ENCODE measurements at regions of chr6 and their contacts with region 1.

Region 1: GRCh38 chr6:291697-292505 is at the start of gene DUSP22:
- DNase-seq: peak; percentile 87
- H3K4me3 Mint-ChIP-seq: peak within 1 kb of the TSS; percentile 91
- H3K27ac Mint-ChIP-seq: peak within 1 kb of the TSS; percentile 92
- H3K4me1 Mint-ChIP-seq: peaks cover 43% of the 10 kb centered on the region
- H3K27me3 Mint-ChIP-seq: peaks cover 1% of the 10 kb centered on the region
- total RNA-seq, gene DUSP22: 28.0 to 28.7 TPM

Region 2: GRCh38 chr6:235763-236360 is 56.0 kb before region 1 on chr6:
- CTCF ChIA-PET with region 1: no interaction called
- POLR2A ChIA-PET with region 1: no interaction called
- intact Hi-C with region 1: loop called (anchors 2 kb)
- DNase-seq: peak; percentile 83
- H3K4me3 Mint-ChIP-seq: peak overlapping the region; percentile 24
- H3K27ac Mint-ChIP-seq: peak overlapping the region; percentile 64
- H3K4me1 Mint-ChIP-seq: peaks cover 43% of the 10 kb centered on the region
- H3K27me3 Mint-ChIP-seq: no peaks in the 10 kb centered on the region

Region 3: DNA sequence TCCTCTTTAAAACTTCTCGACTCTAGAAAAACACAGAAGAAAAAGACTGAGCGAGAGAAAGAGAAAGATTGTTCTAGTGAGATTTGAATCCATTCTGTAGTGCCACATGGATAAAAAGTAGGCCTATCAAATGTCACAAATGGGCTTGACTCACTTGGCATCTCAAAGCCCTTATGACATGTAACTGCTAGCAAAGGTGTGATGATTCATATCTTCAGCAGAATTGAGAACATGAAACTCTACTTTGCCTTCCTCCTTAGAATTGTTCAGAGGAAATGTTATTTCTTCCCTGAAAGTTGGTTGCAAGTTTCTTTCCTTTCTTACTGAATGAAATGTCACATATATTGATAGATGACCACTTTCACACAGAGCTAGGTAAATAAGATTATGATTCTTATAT is 40.0 kb before region 1 on chr6:
- CTCF ChIA-PET with region 1: no interaction called
- POLR2A ChIA-PET with region 1: no interaction called
- intact Hi-C with region 1: loop called (anchors 1 kb)
- DNase-seq: no peak
- H3K4me3 Mint-ChIP-seq: no peak overlapping the region
- H3K27ac Mint-ChIP-seq: peak overlapping the region; percentile 61
- H3K4me1 Mint-ChIP-seq: peaks cover 30% of the 10 kb centered on the region
- H3K27me3 Mint-ChIP-seq: peaks cover 2% of the 10 kb centered on the region

Region 4: GRCh38 chr6:319177-320131 is 27.6 kb after region 1 on chr6:
- CTCF ChIA-PET with region 1: interaction called, 3 read pairs
- POLR2A ChIA-PET with region 1: no interaction called
- intact Hi-C with region 1: loop called (anchors 1 kb)
- DNase-seq: peak; percentile 55
- H3K4me3 Mint-ChIP-seq: no peak overlapping the region
- H3K27ac Mint-ChIP-seq: peak overlapping the region; percentile 60
- H3K4me1 Mint-ChIP-seq: peaks cover 20% of the 10 kb centered on the region
- H3K27me3 Mint-ChIP-seq: peaks cover 2% of the 10 kb centered on the region

Region 5: GRCh38 chr6:506508-506907 is 214.6 kb after region 1 on chr6:
- CTCF ChIA-PET with region 1: no interaction called
- POLR2A ChIA-PET with region 1: no interaction called
- intact Hi-C with region 1: loop called (anchors 5 kb)
- DNase-seq: peak; percentile 76
- H3K4me3 Mint-ChIP-seq: peak overlapping the region; percentile 30
- H3K27ac Mint-ChIP-seq: peak overlapping the region; percentile 100
- H3K4me1 Mint-ChIP-seq: peaks cover 95% of the 10 kb centered on the region
- H3K27me3 Mint-ChIP-seq: no peaks in the 10 kb centered on the region

Measured in activated CD4-positive, alpha-beta memory T cell treated with anti-CD3 and anti-CD28 coated beads for 36 hours (primary cell).